ENCODE measurements at regions of chr11 and their contacts with region 1.

Region 1: DNA sequence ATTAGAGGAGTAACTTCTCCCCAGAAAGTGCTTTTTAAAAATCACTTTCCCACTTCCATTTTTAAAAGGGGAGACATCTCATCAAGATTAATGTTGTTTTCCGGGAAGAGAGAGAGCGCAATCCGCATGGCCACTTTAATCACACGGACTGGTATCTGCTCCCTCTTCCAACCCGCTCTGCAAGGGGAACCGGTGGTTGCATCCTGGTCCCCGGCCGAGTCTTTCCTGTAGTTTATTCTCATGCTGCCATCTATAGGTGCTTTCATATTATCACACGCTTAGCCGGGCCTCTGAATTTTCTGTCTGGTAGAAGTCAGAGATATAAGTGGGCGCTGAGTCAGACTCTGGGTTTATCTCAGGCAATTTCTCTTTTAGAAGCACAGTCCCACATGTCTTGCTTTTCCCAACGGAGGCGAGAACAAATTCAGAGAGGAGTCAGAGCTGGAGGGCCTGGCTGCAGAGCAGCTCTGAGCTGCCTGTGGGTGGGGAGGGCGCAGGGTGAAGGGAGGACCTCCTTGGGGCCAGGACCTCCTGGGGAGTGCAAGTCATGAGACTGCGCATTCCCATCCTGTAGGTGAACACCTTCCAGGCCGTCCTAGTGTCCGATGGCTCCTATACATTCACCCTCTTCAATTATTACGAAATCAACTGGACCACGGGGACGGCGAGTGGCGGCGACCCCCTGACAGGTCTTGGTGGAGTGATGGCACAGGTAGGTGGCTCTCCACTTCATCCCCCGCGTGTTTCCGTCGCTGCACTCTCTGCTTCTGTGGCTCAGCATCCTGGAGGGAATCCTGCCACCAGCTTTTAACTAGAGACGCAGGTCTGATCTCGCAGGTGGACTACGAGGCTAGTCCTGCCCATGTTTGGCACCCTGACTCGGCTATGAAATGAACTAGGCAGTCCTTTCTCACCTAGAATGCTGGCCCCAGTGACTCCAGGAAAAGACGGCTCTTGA is 11.7 kb downstream of the TECTA start:
- DNase-seq: peak; percentile 56
- H3K4me3 ChIP-seq: no peak overlapping the region
- H3K27ac ChIP-seq: no peak overlapping the region
- H3K4me1 ChIP-seq: no peaks in the 10 kb centered on the region
- H3K27me3 ChIP-seq: no peaks in the 10 kb centered on the region
- CTCF ChIP-seq: peak; percentile 38 to 57

Region 2: DNA sequence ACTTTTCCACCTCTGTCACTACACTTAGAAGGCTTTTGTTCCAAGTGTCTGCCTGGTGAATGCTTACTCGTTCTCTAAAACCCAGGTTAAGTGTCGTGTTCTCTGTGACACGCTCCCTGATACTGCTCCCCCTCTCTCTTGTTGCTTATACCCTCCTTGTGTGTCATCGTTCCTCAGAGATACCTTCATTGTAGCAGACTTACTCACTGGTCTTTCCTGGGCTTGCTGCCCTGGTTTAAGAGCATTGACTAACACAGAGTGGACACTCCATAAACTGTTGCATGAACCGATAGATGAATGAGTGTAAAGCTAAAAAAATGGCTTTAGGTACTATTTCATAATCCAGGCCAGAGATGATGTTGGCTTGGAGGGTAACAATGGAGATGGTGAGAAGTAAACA is 429.9 kb before region 1 on chr11:
- CTCF ChIA-PET with region 1: no interaction called
- dilution Hi-C with region 1: no loop called
- in situ Hi-C with region 1: no loop called
- intact Hi-C with region 1: loop called (anchors 1 kb)
- DNase-seq: peak; percentile 7
- H3K4me3 ChIP-seq: no peak overlapping the region
- H3K27ac ChIP-seq: no peak overlapping the region
- H3K4me1 ChIP-seq: no peaks in the 10 kb centered on the region
- H3K27me3 ChIP-seq: no peaks in the 10 kb centered on the region
- CTCF ChIP-seq: no peak

Region 3: GRCh38 chr11:120801801-120802689 is 310.7 kb before region 1 on chr11:
- CTCF ChIA-PET with region 1: no interaction called
- dilution Hi-C with region 1: no loop called
- in situ Hi-C with region 1: no loop called
- intact Hi-C with region 1: loop called (anchors 5 kb)
- DNase-seq: peak; percentile 40
- H3K4me3 ChIP-seq: no peak overlapping the region
- H3K27ac ChIP-seq: no peak overlapping the region
- H3K4me1 ChIP-seq: no peaks in the 10 kb centered on the region
- H3K27me3 ChIP-seq: no peaks in the 10 kb centered on the region
- CTCF ChIP-seq: peak; percentile 86 to 93

Region 4: GRCh38 chr11:120929664-120930154 is 183.1 kb before region 1 on chr11:
- CTCF ChIA-PET with region 1: no interaction called
- dilution Hi-C with region 1: no loop called
- in situ Hi-C with region 1: no loop called
- intact Hi-C with region 1: loop called (anchors 1 kb)
- DNase-seq: no peak
- H3K4me3 ChIP-seq: no peak overlapping the region
- H3K27ac ChIP-seq: no peak overlapping the region
- H3K4me1 ChIP-seq: no peaks in the 10 kb centered on the region
- H3K27me3 ChIP-seq: no peaks in the 10 kb centered on the region
- CTCF ChIP-seq: peak; percentile 57 to 74

Region 5: GRCh38 chr11:121067453-121067852 is 45.3 kb before region 1 on chr11:
- CTCF ChIA-PET with region 1: no interaction called
- dilution Hi-C with region 1: no loop called
- in situ Hi-C with region 1: no loop called
- intact Hi-C with region 1: no loop called
- DNase-seq: no peak
- H3K4me3 ChIP-seq: no peak overlapping the region
- H3K27ac ChIP-seq: no peak overlapping the region
- H3K4me1 ChIP-seq: no peaks in the 10 kb centered on the region
- H3K27me3 ChIP-seq: no peaks in the 10 kb centered on the region
- CTCF ChIP-seq: no peak

Region 6: GRCh38 chr11:121194731-121195596 is 82.2 kb after region 1 on chr11:
- CTCF ChIA-PET with region 1: no interaction called
- dilution Hi-C with region 1: no loop called
- in situ Hi-C with region 1: no loop called
- intact Hi-C with region 1: loop called (anchors 5 kb)
- DNase-seq: peak; percentile 41
- H3K4me3 ChIP-seq: no peak overlapping the region
- H3K27ac ChIP-seq: no peak overlapping the region
- H3K4me1 ChIP-seq: no peaks in the 10 kb centered on the region
- H3K27me3 ChIP-seq: peaks cover 5% of the 10 kb centered on the region
- CTCF ChIP-seq: peak; percentile 77 to 81

Measured in mammary epithelial cell (primary cell).